Dendritic cell treated with granulocyte-macrophage colony-stimulating factor and Interleukin-4, amounts not matched to agents 40 ng/mL and 50 ng/mL, for 4 days (primary cell): ENCODE measurements at regions of chr13 and their contacts with region 1.

Region 1: GRCh38 chr13:46553886-46554858 is 1.2 kb downstream of the LRCH1 start:
- H3K4me3 Mint-ChIP-seq: peak overlapping the region; percentile 83
- H3K27ac Mint-ChIP-seq: peak overlapping the region; percentile 90
- H3K4me1 Mint-ChIP-seq: peaks cover 43% of the 10 kb centered on the region
- H3K27me3 Mint-ChIP-seq: peaks cover 5% of the 10 kb centered on the region

Region 2: GRCh38 chr13:46595136-46595886 is 41.1 kb after region 1 on chr13:
- intact Hi-C with region 1: loop called (anchors 5 kb)
- H3K4me3 Mint-ChIP-seq: peak overlapping the region; percentile 42
- H3K27ac Mint-ChIP-seq: peak overlapping the region; percentile 87
- H3K4me1 Mint-ChIP-seq: peaks cover 63% of the 10 kb centered on the region
- H3K27me3 Mint-ChIP-seq: no peaks in the 10 kb centered on the region

Region 3: GRCh38 chr13:46721054-46721453 is 166.9 kb after region 1 on chr13:
- intact Hi-C with region 1: loop called (anchors 1 kb)
- H3K4me3 Mint-ChIP-seq: no peak overlapping the region
- H3K27ac Mint-ChIP-seq: no peak overlapping the region
- H3K4me1 Mint-ChIP-seq: no peaks in the 10 kb centered on the region
- H3K27me3 Mint-ChIP-seq: no peaks in the 10 kb centered on the region

Region 4: DNA sequence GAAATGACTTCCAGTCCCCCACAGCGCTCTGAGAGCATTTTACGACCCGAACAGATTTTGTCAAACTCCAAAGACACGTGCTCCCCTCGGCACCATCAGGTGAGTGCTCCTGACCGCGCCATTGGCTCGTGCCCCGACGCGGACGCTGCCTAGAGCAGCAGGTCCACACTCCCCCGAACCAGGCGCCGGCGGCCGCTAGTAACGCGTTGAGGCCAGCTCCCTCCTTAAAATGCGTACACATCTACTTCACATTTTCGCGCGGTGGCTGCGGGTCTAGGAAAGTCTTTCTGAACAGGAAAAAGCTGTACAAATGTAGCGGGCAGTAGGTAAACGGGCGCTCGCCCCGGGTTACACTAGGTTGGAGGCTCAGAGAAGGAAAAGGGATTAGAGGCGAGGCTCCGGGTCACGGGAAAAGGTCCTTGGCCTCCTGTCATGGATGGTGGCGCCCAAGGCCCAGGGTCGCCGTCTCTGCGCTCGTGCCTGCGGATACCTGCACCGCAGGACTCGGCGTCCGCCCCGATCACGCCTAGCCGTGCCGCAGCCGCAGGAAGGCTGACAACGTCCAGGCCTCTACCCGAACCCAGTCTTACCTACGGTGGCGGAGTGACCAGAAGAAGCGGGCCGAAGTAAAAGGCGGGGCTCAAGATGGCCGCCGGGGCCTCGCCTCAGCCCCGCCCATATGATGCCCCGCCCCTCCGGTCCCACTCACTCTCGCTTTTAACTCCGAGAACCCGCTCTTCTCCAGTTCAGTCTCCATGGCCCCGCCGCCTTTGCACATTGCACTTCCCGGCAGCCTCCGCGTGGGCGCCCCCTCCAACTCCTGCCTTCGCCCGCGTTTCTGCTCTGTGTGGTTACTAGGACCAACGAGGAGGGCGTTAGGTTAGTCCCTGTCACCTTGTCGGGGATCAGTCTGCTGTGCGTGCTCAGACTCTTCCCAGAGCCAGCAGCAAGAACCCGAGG is 242.6 kb after region 1 on chr13 and contains the start of gene ESD:
- intact Hi-C with region 1: loop called (anchors 2 kb)
- H3K4me3 Mint-ChIP-seq: peak within 1 kb of the TSS; percentile 96
- H3K27ac Mint-ChIP-seq: peak within 1 kb of the TSS; percentile 94
- H3K4me1 Mint-ChIP-seq: peaks cover 33% of the 10 kb centered on the region
- H3K27me3 Mint-ChIP-seq: no peaks in the 10 kb centered on the region

Region 5: DNA sequence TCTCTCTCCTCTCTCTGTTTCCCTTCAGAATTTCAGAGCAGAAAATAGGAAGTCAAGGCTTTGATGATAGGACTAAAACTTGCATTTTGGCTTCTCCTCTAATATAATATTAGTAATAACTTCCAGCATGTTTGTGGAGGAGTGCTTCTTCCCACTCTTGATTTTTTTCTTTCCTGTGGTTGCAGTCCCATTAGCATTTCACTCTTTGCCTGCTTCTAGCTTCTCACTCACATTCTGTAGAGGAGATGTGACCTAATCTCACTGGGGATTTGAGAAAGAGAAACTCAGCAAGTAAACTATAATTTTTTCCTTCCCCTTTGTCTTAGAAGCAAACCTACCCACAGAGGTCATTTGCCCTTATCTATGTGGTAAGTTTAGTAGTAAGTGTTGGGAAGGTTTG is 512.1 kb after region 1 on chr13:
- intact Hi-C with region 1: no loop called
- H3K4me3 Mint-ChIP-seq: no peak overlapping the region
- H3K27ac Mint-ChIP-seq: no peak overlapping the region
- H3K4me1 Mint-ChIP-seq: peaks cover 10% of the 10 kb centered on the region
- H3K27me3 Mint-ChIP-seq: peaks cover 1% of the 10 kb centered on the region